Activated CD4-positive, alpha-beta memory T cell treated with anti-CD3 and anti-CD28 coated beads, Interleukin-2, amount 10 ng/mL, durations not matched to agents 7 days and 5 days (primary cell): ENCODE measurements at regions of chr1 and their contacts with region 1.

Region 1: GRCh38 chr1:198681831-198682759 is 43.3 kb downstream of the PTPRC start:
- DNase-seq: peak; percentile 90
- H3K4me3 Mint-ChIP-seq: peak overlapping the region; percentile 58
- H3K27ac Mint-ChIP-seq: peak overlapping the region; percentile 94
- H3K4me1 Mint-ChIP-seq: peaks cover 85% of the 10 kb centered on the region
- H3K27me3 Mint-ChIP-seq: no peaks in the 10 kb centered on the region

Region 2: GRCh38 chr1:198387587-198387986 is 294.5 kb before region 1 on chr1:
- CTCF ChIA-PET with region 1: no interaction called
- POLR2A ChIA-PET with region 1: no interaction called
- DNase-seq: no peak
- H3K4me3 Mint-ChIP-seq: no peak overlapping the region
- H3K27ac Mint-ChIP-seq: no peak overlapping the region
- H3K4me1 Mint-ChIP-seq: no peaks in the 10 kb centered on the region
- H3K27me3 Mint-ChIP-seq: no peaks in the 10 kb centered on the region

Region 3: GRCh38 chr1:198520524-198521254 is 161.4 kb before region 1 on chr1:
- CTCF ChIA-PET with region 1: interaction called, 7 read pairs
- POLR2A ChIA-PET with region 1: interaction called, 46 read pairs
- DNase-seq: no peak
- H3K4me3 Mint-ChIP-seq: peak overlapping the region; percentile 53
- H3K27ac Mint-ChIP-seq: peak overlapping the region; percentile 81
- H3K4me1 Mint-ChIP-seq: peaks cover 63% of the 10 kb centered on the region
- H3K27me3 Mint-ChIP-seq: no peaks in the 10 kb centered on the region

Region 4: GRCh38 chr1:198620951-198621824 is 60.9 kb before region 1 on chr1:
- CTCF ChIA-PET with region 1: interaction called, 19 read pairs
- POLR2A ChIA-PET with region 1: interaction called, 194 read pairs
- DNase-seq: peak; percentile 84
- H3K4me3 Mint-ChIP-seq: peak overlapping the region; percentile 82
- H3K27ac Mint-ChIP-seq: peak overlapping the region; percentile 99
- H3K4me1 Mint-ChIP-seq: peaks cover 85% of the 10 kb centered on the region
- H3K27me3 Mint-ChIP-seq: no peaks in the 10 kb centered on the region

Region 5: GRCh38 chr1:198651650-198652400 is 30.3 kb before region 1 on chr1:
- CTCF ChIA-PET with region 1: interaction called, 7 read pairs
- POLR2A ChIA-PET with region 1: interaction called, 240 read pairs
- DNase-seq: no peak
- H3K4me3 Mint-ChIP-seq: peak overlapping the region; percentile 65
- H3K27ac Mint-ChIP-seq: peak overlapping the region; percentile 67
- H3K4me1 Mint-ChIP-seq: peaks cover 78% of the 10 kb centered on the region
- H3K27me3 Mint-ChIP-seq: no peaks in the 10 kb centered on the region

Region 6: DNA sequence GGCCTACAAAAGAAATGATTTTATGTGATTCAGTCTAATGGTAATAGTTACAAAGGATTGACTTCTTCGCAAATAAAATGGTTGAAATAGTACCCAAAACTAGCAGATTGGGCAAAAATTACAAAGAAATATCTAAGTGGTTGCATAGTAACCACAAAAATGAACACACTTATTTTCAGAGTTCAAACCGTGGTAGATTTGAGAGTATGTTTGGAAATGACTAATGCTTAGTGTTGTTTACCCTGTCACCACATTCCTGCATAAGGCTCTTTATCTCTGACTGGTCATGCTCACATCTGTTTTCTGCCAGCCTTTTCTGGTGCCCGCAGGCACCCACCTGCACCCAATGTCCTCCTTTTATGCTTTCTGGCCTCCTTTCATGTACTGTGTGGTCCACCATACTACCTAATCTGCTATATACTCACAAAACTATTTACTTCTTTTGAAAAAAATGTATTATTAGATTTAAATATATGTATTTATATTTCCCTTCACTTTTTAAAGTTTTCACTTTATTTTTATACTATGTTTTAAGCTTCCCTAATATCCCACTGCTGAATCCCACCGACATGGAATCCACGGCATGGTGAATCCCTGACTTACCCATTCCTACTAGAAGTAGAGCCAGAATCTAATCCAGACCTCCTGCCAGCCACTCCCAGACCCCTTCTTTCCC is 12.9 kb before region 1 on chr1:
- CTCF ChIA-PET with region 1: interaction called, 33 read pairs
- POLR2A ChIA-PET with region 1: interaction called, 251 read pairs
- DNase-seq: peak; percentile 60
- H3K4me3 Mint-ChIP-seq: peak overlapping the region; percentile 41
- H3K27ac Mint-ChIP-seq: peak overlapping the region; percentile 87
- H3K4me1 Mint-ChIP-seq: peaks cover 88% of the 10 kb centered on the region
- H3K27me3 Mint-ChIP-seq: no peaks in the 10 kb centered on the region